Dendritic cell treated with granulocyte-macrophage colony-stimulating factor and Interleukin-4, amounts not matched to agents 40 ng/mL and 50 ng/mL, for 4 days (primary cell): ENCODE measurements at regions of chr16 and their contacts with region 1.

Region 1: DNA sequence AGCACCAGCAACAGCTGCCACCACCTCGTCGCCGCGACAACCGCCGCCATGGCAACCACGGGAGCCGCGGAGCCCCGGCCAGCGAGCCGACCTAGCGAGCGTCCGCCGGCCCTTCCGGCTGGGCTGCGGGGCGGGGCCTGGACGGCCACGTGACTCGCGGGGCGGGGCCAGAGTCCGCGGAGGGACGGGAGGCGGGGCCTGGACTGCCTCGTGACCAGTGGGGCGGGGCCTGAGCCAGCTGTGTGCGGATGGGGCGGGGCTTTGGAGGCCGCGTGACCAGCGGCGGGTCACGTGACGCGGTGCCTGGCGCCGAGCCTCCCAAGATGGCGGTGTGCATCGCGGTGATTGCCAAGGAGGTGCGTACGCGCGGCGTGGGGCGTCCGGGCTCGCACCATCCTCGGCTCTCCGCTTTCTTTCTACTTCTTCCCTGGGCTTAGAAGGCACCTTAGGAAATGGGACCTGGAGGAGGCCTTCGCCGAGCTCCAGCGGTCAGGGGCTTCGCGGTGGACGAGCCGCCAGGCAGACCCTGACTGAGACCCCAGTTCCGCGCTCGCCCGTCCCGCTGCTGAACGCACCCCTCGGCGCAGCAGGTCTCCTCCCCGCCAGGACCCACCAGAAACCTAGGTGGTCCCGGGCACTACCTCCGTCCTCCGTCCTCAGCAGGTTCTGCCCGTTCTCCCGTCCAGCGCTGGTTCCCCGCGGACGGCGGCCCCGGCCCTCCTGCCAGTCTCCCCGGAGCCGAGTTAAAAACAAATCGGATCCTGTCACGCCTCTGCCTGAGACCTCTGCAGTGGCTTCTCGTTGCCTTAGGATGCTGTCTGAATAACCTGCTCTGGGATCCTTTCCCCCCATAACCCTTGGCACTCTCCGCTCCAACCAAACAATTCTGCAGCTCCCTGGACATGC is at the starts of genes GALNS and TRAPPC2L:
- H3K4me3 Mint-ChIP-seq: peak within 1 kb of the TSS; percentile 90
- H3K27ac Mint-ChIP-seq: peak within 1 kb of the TSS; percentile 83
- H3K4me1 Mint-ChIP-seq: peaks cover 62% of the 10 kb centered on the region
- H3K27me3 Mint-ChIP-seq: no peaks in the 10 kb centered on the region

Region 2: DNA sequence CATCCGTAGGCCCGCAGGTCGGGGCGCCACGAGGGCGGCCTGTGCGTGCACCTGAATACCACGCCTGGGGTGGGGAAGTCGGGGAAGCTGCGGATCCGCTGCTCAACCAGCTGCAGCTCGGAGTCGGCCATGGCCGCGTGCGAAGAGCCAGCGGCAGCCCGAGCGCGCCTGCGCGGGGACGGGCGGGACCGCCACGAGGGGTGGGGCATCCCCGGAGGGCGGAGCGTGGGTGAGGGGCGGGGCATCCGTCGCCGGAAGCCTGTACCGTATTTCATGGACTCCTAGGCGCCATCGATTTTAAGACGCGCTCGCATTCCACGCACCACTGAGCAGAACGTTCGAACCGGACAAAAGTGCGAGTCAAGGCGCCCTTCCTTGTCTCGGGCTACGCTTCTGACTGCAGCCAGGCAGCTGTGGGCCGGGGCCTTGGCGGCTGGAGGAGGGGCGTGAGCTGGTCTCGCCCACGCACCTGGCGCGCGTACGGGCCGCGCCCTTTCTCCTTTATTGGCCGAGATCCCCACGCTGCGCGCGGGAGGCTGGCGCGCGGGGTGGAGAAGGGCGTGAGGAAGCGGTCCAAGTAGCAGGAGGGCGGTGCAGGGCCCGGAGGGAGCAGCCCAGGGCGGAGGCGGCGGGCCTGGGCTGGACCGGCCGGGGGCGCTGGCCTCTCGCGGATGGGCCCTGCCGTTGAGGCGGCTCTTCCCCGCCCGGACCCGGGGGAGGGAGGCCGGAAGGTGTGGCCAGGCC is 45.1 kb before region 1 on chr16 and contains the start of gene APRT:
- intact Hi-C with region 1: loop called (anchors 2 kb)
- H3K4me3 Mint-ChIP-seq: peak within 1 kb of the TSS; percentile 80
- H3K27ac Mint-ChIP-seq: peak within 1 kb of the TSS; percentile 88
- H3K4me1 Mint-ChIP-seq: peaks cover 51% of the 10 kb centered on the region
- H3K27me3 Mint-ChIP-seq: no peaks in the 10 kb centered on the region

Region 3: GRCh38 chr16:89031715-89032659 is 174.9 kb after region 1 on chr16:
- intact Hi-C with region 1: no loop called
- H3K4me3 Mint-ChIP-seq: peak overlapping the region; percentile 48
- H3K27ac Mint-ChIP-seq: peak overlapping the region; percentile 71
- H3K4me1 Mint-ChIP-seq: peaks cover 26% of the 10 kb centered on the region
- H3K27me3 Mint-ChIP-seq: peaks cover 26% of the 10 kb centered on the region

Region 4: GRCh38 chr16:89155184-89155679 is 298.2 kb after region 1 on chr16:
- intact Hi-C with region 1: no loop called
- H3K4me3 Mint-ChIP-seq: no peak overlapping the region
- H3K27ac Mint-ChIP-seq: no peak overlapping the region
- H3K4me1 Mint-ChIP-seq: peaks cover 31% of the 10 kb centered on the region
- H3K27me3 Mint-ChIP-seq: peaks cover 40% of the 10 kb centered on the region